GM12878 (cell line): ENCODE measurements at regions of chr21 and their contacts with region 1.

Region 1: DNA sequence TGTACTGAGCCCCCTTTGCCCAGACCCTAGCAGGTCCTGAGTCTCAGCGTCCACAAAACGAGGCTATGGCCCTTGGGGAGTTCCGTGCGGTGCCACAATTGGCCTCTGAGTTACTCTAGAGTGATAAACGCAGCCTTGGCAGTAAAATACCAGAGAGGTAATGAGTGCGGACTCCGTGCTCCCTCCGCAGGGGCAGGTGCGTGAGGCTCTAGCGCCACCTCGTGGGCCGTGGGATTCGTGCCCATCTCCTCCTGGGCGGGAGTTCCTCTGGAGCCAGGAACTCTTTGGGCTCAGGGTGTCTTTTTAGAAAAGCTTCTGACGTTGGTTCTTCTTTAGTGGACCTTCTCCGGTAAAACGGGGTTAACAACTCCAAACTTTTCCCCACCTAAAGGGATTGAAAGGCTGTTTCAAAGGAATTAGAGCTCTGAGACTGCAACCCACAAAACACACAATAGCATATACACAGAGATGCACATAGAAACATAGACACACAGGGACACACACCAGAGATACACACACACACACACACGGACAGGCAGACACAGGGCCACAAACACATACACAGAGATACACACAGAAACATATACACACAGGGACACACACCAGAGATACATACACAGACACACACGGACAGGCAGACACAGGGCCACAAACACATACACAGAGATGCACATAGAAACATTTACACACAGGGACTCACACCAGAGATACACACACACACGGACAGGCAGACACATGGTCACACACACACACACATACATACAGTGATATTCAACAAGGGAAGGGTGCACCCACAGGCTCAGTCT is 99.4 kb downstream of the KCNJ15 start:
- DNase-seq: peak; percentile 17
- ATAC-seq: peak; percentile 92
- H3K4me3 ChIP-seq: no peak overlapping the region
- H3K27ac ChIP-seq: no peak overlapping the region
- H3K4me1 ChIP-seq: no peaks in the 10 kb centered on the region; the same call in 1 of the 2 replicates
- H3K27me3 ChIP-seq: no peaks in the 10 kb centered on the region
- CTCF ChIP-seq: peak; percentile 75 to 98 (median 96)
- EP300 ChIP-seq: no peak
- POLR2A ChIP-seq: no peak
- RAD21 ChIP-seq: peak; percentile 93

Region 2: DNA sequence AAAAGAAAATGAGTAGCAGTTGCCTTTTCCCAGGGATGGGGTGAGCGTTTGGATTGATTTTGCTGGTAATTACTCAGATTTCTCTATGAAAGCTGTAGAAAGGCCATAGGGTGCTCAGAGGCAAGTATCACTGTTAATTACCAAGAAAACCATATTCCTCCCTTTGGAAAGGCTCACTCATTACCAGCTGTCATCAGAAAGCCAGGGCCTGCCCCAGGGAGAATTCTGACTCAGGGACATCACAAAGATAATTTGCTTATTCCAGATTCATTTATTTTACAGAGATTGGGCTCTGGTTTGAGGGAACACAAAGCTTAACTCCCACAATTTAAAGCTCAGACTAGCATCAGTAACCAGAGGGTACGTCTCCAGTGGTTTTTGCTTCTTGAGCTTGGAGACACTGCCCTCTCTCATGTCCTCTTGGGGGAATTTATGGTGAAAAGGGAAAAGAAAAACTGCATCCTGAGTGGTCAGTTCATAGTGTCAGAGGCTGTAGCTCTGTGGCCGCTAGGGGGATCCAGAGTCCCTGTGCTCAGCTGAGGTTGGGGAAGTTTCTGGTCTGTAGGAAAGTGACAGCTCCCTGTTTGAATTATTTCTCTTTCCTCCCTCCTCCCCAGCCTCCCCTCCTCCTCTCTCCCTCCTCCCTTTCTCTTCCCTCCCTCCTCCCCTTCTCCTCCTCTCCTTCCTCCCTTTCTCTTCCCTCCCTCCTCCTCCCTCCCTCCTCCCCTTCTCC is 644.2 kb before region 1 on chr21:
- CTCF ChIA-PET with region 1: interaction called, 17 read pairs
- POLR2A ChIA-PET with region 1: no interaction called
- RAD21 ChIA-PET with region 1: interaction called, 4 read pairs
- SMC1A ChIA-PET with region 1: interaction called, 4 read pairs
- in situ Hi-C with region 1: loop called (anchors 5 kb)
- intact Hi-C with region 1: loop called (anchors 1 kb)
- DNase-seq: no peak
- ATAC-seq: peak; percentile 97
- H3K4me3 ChIP-seq: no peak overlapping the region
- H3K27ac ChIP-seq: no peak overlapping the region
- H3K4me1 ChIP-seq: no peaks in the 10 kb centered on the region
- H3K27me3 ChIP-seq: no peaks in the 10 kb centered on the region
- CTCF ChIP-seq: peak; percentile 85 to 95 (median 89)
- EP300 ChIP-seq: no peak
- POLR2A ChIP-seq: no peak
- RAD21 ChIP-seq: peak; percentile 74

Region 3: GRCh38 chr21:38170280-38170679 is 185.9 kb before region 1 on chr21:
- CTCF ChIA-PET with region 1: interaction called, 164 read pairs
- POLR2A ChIA-PET with region 1: no interaction called
- RAD21 ChIA-PET with region 1: interaction called, 63 read pairs
- SMC1A ChIA-PET with region 1: interaction called, 28 read pairs
- in situ Hi-C with region 1: loop called (anchors 5 kb)
- intact Hi-C with region 1: loop called (anchors 1 kb)
- DNase-seq: no peak
- ATAC-seq: peak; percentile 76
- H3K4me3 ChIP-seq: no peak overlapping the region
- H3K27ac ChIP-seq: no peak overlapping the region
- H3K4me1 ChIP-seq: no peaks in the 10 kb centered on the region
- H3K27me3 ChIP-seq: no peaks in the 10 kb centered on the region; a peak in 1 of 4 replicates
- CTCF ChIP-seq: peak; percentile 36 to 82 (median 68); a peak in 5 of 6 replicates
- EP300 ChIP-seq: no peak
- POLR2A ChIP-seq: no peak
- RAD21 ChIP-seq: peak; percentile 62

Region 4: DNA sequence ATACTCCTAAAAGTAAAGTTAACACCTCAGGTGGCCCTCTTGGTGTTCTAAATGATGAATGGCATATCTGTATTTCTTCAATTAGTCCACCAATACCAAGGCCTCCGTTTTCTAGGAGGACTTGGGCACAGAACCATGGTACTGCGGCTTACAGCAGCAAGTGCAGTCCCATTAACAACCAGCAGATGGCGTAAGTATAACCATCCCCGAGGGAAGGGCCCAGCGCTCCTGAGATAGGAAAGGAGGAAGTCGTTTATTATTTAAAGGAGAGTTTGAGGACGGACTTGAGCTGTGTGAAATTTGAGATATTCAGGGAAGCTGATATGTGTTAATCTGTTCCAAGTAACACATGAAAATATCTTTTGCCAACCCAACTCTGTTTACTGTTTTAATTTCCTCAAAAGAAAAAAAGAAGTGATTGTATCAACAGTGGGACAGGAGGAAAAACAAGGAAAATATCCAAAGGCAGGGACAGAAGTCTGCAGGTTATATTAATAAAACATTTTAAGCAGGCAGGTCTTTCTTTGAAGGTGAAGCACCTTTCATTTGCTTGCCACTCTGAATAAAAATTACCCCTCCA is 137.1 kb before region 1 on chr21:
- CTCF ChIA-PET with region 1: interaction called, 195 read pairs
- POLR2A ChIA-PET with region 1: no interaction called
- RAD21 ChIA-PET with region 1: interaction called, 110 read pairs
- SMC1A ChIA-PET with region 1: interaction called, 90 read pairs
- in situ Hi-C with region 1: loop called (anchors 5 kb)
- intact Hi-C with region 1: loop called (anchors 1 kb)
- DNase-seq: no peak
- ATAC-seq: peak; percentile 76
- H3K4me3 ChIP-seq: no peak overlapping the region
- H3K27ac ChIP-seq: no peak overlapping the region
- H3K4me1 ChIP-seq: no peaks in the 10 kb centered on the region
- H3K27me3 ChIP-seq: no peaks in the 10 kb centered on the region
- CTCF ChIP-seq: peak; percentile 77 to 90 (median 81)
- EP300 ChIP-seq: no peak
- POLR2A ChIP-seq: no peak
- RAD21 ChIP-seq: peak; percentile 75

Region 5: DNA sequence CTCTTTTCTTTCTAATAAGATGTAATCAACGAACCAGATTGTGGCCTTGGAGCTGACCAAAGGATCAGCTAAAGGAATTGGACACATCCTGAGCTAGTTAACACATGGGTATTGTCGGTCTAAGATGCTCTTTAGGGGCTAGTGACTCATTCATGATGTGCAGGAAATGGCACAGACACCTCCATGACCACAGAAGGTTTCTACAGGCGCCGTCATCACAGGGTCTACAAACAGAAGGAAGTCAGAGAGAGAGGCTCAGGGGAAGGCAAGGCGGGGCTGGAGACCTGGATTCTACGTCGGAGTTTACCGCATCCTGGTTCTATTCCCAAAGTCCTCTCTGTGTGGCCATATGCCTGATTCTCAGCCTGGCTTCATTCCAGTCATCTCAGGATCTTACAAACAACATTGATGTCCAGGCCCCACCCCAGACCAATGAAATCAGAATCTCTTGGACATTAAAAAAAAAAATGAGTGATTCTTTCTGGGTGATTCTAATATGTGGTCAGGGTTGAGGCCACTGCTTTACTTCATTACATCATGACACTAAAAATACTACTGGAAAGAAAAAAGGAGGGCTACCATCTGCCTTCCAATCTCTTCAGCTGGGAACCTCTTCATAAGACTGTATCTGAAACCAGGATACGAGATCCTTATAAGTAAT is 111.2 kb before region 1 on chr21:
- CTCF ChIA-PET with region 1: interaction called, 9 read pairs
- POLR2A ChIA-PET with region 1: no interaction called
- RAD21 ChIA-PET with region 1: interaction called, 4 read pairs
- SMC1A ChIA-PET with region 1: interaction called, 19 read pairs
- in situ Hi-C with region 1: no loop called
- intact Hi-C with region 1: no loop called
- DNase-seq: peak; percentile 59
- ATAC-seq: peak; percentile 90
- H3K4me3 ChIP-seq: no peak overlapping the region
- H3K27ac ChIP-seq: no peak overlapping the region
- H3K4me1 ChIP-seq: peaks cover 16% of the 10 kb centered on the region
- H3K27me3 ChIP-seq: no peaks in the 10 kb centered on the region
- CTCF ChIP-seq: no peak
- EP300 ChIP-seq: peak; percentile 34 to 87; a peak in 2 of 4 replicates
- POLR2A ChIP-seq: no peak
- RAD21 ChIP-seq: no peak

Region 6: DNA sequence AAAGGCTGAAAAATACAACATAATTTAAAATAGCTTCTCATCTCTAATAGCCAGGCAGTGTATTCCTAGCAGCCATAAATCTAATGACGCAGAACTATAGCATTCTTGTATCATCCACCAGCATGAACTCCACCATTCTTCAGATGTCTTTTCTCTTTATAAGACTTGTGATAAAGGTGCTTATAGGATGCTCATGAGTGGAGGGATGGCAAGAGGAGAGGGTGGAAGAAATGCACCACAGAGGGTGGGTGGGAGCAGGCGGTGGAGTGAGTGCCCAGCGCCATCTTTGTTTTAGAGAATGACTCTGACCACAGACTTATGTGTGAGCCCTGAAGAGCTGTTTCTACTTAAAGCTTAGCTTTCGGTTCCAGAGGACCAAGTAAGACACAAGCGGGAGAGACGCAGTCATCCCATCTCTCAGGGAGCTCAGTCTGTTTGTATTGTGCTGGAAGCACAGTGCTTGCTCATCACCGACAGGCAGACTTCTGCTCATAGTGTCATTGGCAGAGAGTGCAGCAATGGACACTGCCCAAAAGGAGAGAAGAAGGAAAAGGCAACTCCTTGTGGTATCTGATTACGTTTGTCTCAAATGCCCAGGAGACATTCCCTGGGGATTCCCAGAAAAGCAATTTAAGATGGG is 33.8 kb before region 1 on chr21:
- CTCF ChIA-PET with region 1: interaction called, 11 read pairs
- POLR2A ChIA-PET with region 1: no interaction called
- RAD21 ChIA-PET with region 1: no interaction called
- SMC1A ChIA-PET with region 1: no interaction called
- in situ Hi-C with region 1: no loop called
- intact Hi-C with region 1: no loop called
- DNase-seq: no peak
- ATAC-seq: no peak
- H3K4me3 ChIP-seq: no peak overlapping the region
- H3K27ac ChIP-seq: no peak overlapping the region
- H3K4me1 ChIP-seq: no peaks in the 10 kb centered on the region
- H3K27me3 ChIP-seq: no peaks in the 10 kb centered on the region
- CTCF ChIP-seq: no peak
- EP300 ChIP-seq: no peak
- POLR2A ChIP-seq: no peak
- RAD21 ChIP-seq: no peak

Region 7: GRCh38 chr21:38343693-38344092 is 12.5 kb before region 1 on chr21:
- CTCF ChIA-PET with region 1: interaction called, 10 read pairs
- POLR2A ChIA-PET with region 1: no interaction called
- RAD21 ChIA-PET with region 1: interaction called, 6 read pairs
- SMC1A ChIA-PET with region 1: interaction called, 5 read pairs
- in situ Hi-C with region 1: no loop called
- intact Hi-C with region 1: no loop called
- DNase-seq: no peak
- ATAC-seq: no peak
- H3K4me3 ChIP-seq: no peak overlapping the region
- H3K27ac ChIP-seq: no peak overlapping the region
- H3K4me1 ChIP-seq: no peaks in the 10 kb centered on the region
- H3K27me3 ChIP-seq: no peaks in the 10 kb centered on the region; a peak in 1 of 4 replicates
- CTCF ChIP-seq: no peak
- EP300 ChIP-seq: no peak
- POLR2A ChIP-seq: no peak
- RAD21 ChIP-seq: no peak